ENCODE measurements at regions of chr21 and their contacts with region 1.

Region 1: GRCh38 chr21:26170471-26171257 is at the start of gene APP:
- DNase-seq: peak; percentile 82
- total RNA-seq, gene APP: 808 and 842 TPM in 2 replicates

Region 2: DNA sequence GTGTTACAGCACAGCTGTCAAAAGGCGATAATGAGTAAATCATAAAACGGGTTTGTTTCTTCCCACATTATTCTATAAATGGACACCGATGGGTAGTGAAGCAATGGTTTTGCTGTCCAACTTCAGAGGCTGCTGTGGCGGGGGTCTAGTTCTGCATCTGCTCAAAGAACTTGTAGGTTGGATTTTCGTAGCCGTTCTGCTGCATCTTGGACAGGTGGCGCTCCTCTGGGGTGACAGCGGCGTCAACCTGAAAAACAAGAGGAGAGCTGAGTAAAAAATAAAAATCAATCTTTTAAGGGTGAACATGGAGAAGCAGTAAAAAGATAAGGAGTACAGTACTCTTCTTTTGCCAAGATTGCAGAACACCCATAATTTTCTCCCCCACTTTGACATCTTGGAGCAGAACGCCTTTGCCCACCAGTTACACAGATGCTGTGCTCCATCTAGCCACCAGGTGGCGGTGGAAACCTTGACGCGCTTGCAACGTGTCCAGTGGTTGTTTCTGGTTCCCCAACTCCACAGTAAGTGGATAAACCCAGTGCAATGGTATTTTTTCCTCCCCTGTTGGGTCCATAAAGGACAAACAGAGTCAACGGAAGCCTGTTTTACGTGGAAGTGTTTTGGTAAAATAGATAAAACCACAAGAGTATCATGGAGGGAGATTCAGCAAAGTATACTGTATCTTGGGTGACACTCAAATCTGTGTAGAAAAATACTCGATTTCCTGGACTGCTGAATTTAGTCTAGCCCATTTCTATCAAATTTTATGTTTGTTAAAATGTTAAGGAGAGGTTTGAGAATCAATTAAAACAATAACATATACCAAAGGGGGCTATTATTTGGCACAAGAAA is 288.9 kb before region 1 on chr21:
- in situ Hi-C with region 1: loop called (anchors 25 kb)
- DNase-seq: peak; percentile 50

Region 3: GRCh38 chr21:26099610-26100219 is 70.9 kb before region 1 on chr21:
- in situ Hi-C with region 1: no loop called
- DNase-seq: no peak